ENCODE measurements at regions of chr16 and their contacts with region 1.

Region 1: GRCh38 chr16:57757326-57757786 is 21.8 kb downstream of the KATNB1 start:
- DNase-seq: peak; percentile 89 to 96 (median 89)
- ATAC-seq: peak; percentile 82 to 90 (median 84)
- H3K4me3 ChIP-seq: no peak overlapping the region
- H3K27ac ChIP-seq: peak overlapping the region in 11 of 12 donors; percentile 50 to 81 (median 73)
- H3K4me1 ChIP-seq: peaks cover 0 to 29% (median 14%) of the 10 kb centered on the region in 12 donors
- H3K27me3 ChIP-seq: no peaks in the 10 kb centered on the region
- CTCF ChIP-seq: peak in 11 of 12 donors; percentile 95 to 99 (median 98)
- POLR2A ChIP-seq: no peak

Region 2: DNA sequence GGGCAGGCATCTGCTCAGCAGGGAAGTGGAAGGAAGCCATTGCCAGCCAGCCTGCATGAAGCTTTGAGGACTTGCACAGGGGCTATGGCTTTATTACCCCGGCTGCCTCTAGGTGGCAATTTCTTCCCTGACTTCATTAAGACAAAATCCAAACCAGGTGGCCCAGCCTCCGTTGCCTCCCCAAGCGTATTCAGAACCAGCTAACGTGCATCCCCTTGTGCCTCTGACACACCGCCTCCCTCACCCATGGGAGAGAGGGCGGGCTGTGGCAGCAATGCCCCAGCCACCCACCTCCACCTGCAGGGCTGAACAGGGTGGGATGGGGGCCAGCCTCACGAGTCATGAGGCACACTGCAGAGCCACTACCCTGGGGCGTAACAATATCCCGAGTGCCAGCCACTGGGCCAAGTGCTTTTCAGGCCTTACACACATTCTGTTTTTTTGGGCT is 38.1 kb after region 1 on chr16:
- intact Hi-C with region 1: loop called in 7 of 10 experiments (anchors 5 kb)
- DNase-seq: peak in 1 of 5 donors; percentile 41
- ATAC-seq: peak in 2 of 4 donors; percentile 2 to 17
- H3K4me3 ChIP-seq: no peak overlapping the region
- H3K27ac ChIP-seq: peak overlapping the region in 4 of 12 donors; percentile 8 to 78 (median 52)
- H3K4me1 ChIP-seq: peaks cover 0 to 71% (median 51%) of the 10 kb centered on the region in 12 donors
- H3K27me3 ChIP-seq: no peaks in the 10 kb centered on the region
- CTCF ChIP-seq: peak in 11 of 12 donors; percentile 15 to 51 (median 36)
- POLR2A ChIP-seq: no peak

Region 3: GRCh38 chr16:57802341-57803133 is 45.2 kb after region 1 on chr16 and contains the start of gene KIFC3:
- intact Hi-C with region 1: loop called in 6 of 10 experiments (anchors 5 kb)
- DNase-seq: peak; percentile 91 to 94 (median 92)
- ATAC-seq: peak in 3 of 4 donors; percentile 27 to 56 (median 47)
- H3K4me3 ChIP-seq: peak within 1 kb of the TSS; percentile 49 to 91 (median 72)
- H3K27ac ChIP-seq: peak within 1 kb of the TSS; percentile 67 to 99 (median 95)
- H3K4me1 ChIP-seq: peaks cover 6 to 88% (median 61%) of the 10 kb centered on the region in 12 donors
- H3K27me3 ChIP-seq: no peaks in the 10 kb centered on the region
- CTCF ChIP-seq: peak in 8 of 12 donors; percentile 20 to 58 (median 41)
- POLR2A ChIP-seq: no peak
- total RNA-seq, gene KIFC3: 46.1 to 105 (median 66.8) TPM

Region 4: DNA sequence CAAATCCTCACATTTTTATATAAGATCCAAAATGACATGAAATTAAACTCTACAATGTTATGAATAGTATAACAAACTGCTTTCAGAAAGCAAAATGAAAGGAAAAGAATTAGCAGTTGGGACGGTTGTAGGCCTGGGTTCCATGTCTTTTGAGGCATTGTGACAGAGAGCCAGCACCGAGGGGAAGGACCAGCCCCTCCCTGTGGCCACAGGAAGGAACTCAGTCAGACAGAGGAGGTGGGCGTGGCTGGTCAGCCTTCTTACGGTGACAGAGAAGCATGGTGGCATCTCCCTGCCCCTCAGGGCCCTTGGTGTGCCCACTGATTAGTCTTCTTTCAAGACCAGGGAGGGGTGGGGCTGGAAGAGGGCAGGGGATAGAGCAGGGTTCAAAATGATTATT is 237.4 kb after region 1 on chr16:
- intact Hi-C with region 1: loop called in 3 of 10 experiments (anchors 5 to 10 kb)
- DNase-seq: peak in 4 of 5 donors; percentile 54 to 76 (median 70)
- ATAC-seq: peak in 3 of 4 donors; percentile 42 to 73 (median 51)
- H3K4me3 ChIP-seq: no peak overlapping the region
- H3K27ac ChIP-seq: peak overlapping the region in 1 of 12 donors; percentile 24
- H3K4me1 ChIP-seq: peaks cover 3 to 56% (median 26%) of the 10 kb centered on the region in 12 donors
- H3K27me3 ChIP-seq: no peaks in the 10 kb centered on the region
- CTCF ChIP-seq: peak in 7 of 12 donors; percentile 7 to 43 (median 36)
- POLR2A ChIP-seq: no peak

Measured in heart left ventricle (tissue), 16 donors.